K562 (cell line): ENCODE measurements at regions of chr1 and their contacts with region 1.

Region 1: GRCh38 chr1:6245086-6245868 is 1.3 kb downstream of the HES3 start:
- DNase-seq: peak; percentile 90 to 92 (median 90)
- ATAC-seq: peak; percentile 89
- H3K4me3 ChIP-seq: peak overlapping the region; percentile 34
- H3K27ac ChIP-seq: no peak overlapping the region
- H3K4me1 ChIP-seq: peaks cover 5 to 64% of the 10 kb centered on the region in 2 experiments; a peak in 3 of 5 replicates
- H3K27me3 ChIP-seq: peaks cover 40 to 70% of the 10 kb centered on the region in 2 experiments
- CTCF ChIP-seq: peak; percentile 90 to 98 (median 96)
- EP300 ChIP-seq: no peak
- POLR2A ChIP-seq: no peak
- RAD21 ChIP-seq: peak; percentile 87 to 95

Region 2: DNA sequence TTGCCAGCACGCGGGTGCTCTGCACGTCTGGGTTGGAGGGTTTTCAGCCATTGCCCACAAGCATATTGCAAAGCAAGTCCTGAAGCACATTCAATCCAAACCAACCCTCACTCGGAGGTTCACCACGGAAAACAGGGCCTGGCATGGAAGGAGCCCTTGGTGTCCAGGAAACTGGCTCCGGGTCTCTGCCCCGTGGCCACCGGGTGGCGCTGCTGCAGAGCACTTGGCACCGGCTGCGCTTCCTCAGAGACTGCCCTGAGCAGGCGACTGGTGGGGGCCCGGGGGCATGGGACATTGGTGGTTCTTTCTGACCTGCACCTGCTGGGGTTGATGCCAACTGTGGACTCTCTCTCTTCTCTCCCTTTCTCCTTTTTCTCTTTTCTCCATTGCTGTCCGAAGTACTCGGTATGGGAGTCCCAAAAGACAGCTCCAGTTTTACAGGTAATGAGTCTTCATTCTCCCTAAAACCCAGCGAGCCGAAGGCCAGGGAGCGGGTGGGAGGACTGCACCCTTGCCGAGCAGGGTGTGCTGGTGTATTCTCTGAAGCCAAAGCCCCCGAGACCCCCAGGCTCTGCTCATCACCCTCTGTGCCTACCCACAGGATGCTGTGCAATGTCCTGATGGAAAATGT is 203.7 kb before region 1 on chr1:
- CTCF ChIA-PET with region 1: interaction called, 16 read pairs
- POLR2A ChIA-PET with region 1: interaction called, 4 read pairs
- in situ Hi-C with region 1: no loop called
- intact Hi-C with region 1: no loop called
- DNase-seq: peak; percentile 70 to 83 (median 81)
- ATAC-seq: peak; percentile 94
- H3K4me3 ChIP-seq: no peak overlapping the region
- H3K27ac ChIP-seq: no peak overlapping the region
- H3K4me1 ChIP-seq: peaks cover 0 to 20% of the 10 kb centered on the region in 2 experiments; a peak in 2 of 5 replicates
- H3K27me3 ChIP-seq: peaks cover 0 to 19% of the 10 kb centered on the region in 2 experiments; a peak in 4 of 5 replicates
- CTCF ChIP-seq: peak; percentile 85 to 89 (median 88)
- EP300 ChIP-seq: no peak
- POLR2A ChIP-seq: no peak
- RAD21 ChIP-seq: peak in 1 of 2 experiments; percentile 84; a peak in 3 of 4 replicates

Region 3: DNA sequence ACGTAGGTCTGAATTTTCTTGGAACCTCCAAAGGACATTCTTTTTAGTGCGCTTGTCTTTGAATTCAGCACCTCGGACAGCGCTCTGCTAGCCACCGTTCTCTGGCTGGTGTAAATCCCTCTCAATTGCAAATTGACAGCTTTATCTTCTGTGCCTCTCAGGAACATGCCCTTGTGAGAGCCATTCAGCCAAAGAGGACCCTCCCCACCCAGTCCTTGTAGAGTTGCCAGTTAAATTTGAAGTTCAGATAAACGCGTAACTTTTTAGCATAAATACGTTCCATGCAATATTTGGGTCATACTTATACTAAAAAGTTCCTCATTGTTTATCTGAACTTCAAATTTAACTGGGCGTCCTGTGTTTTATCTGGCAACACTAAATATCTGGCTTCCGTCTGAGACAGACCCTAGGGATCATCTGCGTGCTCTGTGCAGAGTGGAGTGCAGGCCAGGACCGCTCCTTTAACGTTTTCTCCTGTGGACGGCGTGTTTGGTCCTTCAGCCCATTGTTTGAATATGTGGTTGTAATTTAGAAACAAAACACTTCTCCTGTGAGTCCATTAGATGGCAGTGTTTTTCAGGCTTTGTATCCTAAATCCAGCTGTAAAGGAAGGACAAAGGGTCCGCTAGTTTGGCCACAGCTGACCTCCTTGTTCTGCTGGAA is 192.6 kb before region 1 on chr1:
- CTCF ChIA-PET with region 1: interaction called, 15 read pairs
- POLR2A ChIA-PET with region 1: interaction called, 6 read pairs
- in situ Hi-C with region 1: no loop called
- intact Hi-C with region 1: loop called (anchors 1 kb)
- DNase-seq: peak; percentile 70 to 83 (median 75)
- ATAC-seq: peak; percentile 86
- H3K4me3 ChIP-seq: no peak overlapping the region
- H3K27ac ChIP-seq: no peak overlapping the region
- H3K4me1 ChIP-seq: peaks cover 0 to under 1% of the 10 kb centered on the region in 2 experiments; a peak in 1 of 5 replicates
- H3K27me3 ChIP-seq: peaks cover 9 to 29% of the 10 kb centered on the region in 2 experiments; a peak in 4 of 5 replicates
- CTCF ChIP-seq: peak; percentile 72 to 84 (median 72)
- EP300 ChIP-seq: no peak
- POLR2A ChIP-seq: no peak
- RAD21 ChIP-seq: peak in 1 of 2 experiments; percentile 85; a peak in 3 of 4 replicates

Region 4: DNA sequence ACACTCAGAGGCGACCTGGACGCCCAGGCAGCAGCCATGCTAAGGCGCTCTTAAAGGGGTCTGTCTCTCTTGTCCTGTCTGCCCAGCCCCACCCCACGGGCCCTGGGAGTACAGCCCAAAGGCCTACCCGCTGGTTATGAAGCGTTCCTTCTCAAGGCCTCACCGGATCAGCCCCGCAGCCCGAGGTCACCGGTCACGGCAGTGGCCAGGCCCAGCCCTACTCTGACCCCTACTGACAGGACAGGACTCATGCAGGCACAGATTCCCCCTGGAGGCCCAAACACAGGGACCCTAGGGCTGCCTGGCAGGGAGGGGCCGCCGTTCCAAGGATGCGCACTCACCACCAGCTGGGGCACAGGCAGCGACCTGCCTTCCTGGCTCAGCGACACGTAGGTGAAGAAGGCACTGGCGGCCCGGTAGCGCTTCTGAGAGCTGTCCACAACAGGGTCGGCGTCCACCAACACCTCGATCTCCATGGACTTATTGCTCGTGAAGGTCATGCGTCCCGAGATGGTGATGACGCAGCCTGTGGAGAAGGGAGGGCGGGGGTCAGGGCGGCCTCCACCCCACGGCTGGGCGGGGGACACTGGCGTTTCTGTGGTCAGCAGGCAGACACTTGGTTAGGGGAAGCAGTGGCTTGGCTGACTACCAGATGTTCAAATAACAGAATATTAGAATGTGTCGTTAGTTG is 35.6 kb after region 1 on chr1:
- CTCF ChIA-PET with region 1: interaction called, 20 read pairs
- POLR2A ChIA-PET with region 1: interaction called, 4 read pairs
- in situ Hi-C with region 1: no loop called
- intact Hi-C with region 1: loop called (anchors 2 kb)
- DNase-seq: peak; percentile 69 to 81 (median 78)
- ATAC-seq: peak; percentile 95
- H3K4me3 ChIP-seq: no peak overlapping the region
- H3K27ac ChIP-seq: no peak overlapping the region
- H3K4me1 ChIP-seq: peaks cover 5 to 52% of the 10 kb centered on the region in 2 experiments; a peak in 4 of 5 replicates
- H3K27me3 ChIP-seq: no peaks in the 10 kb centered on the region; a peak in 1 of 5 replicates
- CTCF ChIP-seq: peak; percentile 76 to 88 (median 81)
- EP300 ChIP-seq: no peak
- POLR2A ChIP-seq: no peak
- RAD21 ChIP-seq: peak; percentile 47 to 80; a peak in 3 of 4 replicates

Region 5: DNA sequence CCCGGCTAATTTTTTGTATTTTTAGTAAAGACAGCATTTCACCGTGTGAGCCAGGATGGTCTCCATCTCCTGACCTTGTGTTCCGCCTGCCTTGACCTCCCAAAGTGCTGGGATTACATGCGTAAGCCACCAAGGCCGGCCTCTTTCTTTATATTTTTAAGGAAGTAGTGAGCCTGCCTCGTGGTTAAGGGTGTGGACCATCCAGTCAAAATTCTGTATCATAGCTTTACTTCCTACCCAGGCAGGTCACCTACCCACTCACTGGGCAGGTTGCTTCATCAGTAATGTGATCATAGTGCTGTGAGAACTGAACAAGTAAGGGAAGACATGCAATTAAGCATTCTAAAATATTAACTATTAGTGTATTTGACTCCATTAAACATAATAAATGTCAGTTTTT is 156.4 kb after region 1 on chr1:
- CTCF ChIA-PET with region 1: interaction called, 7 read pairs
- POLR2A ChIA-PET with region 1: no interaction called
- in situ Hi-C with region 1: no loop called
- intact Hi-C with region 1: loop called (anchors 2 kb)
- DNase-seq: no peak
- ATAC-seq: no peak
- H3K4me3 ChIP-seq: no peak overlapping the region
- H3K27ac ChIP-seq: no peak overlapping the region
- H3K4me1 ChIP-seq: peaks cover 0 to 12% of the 10 kb centered on the region in 2 experiments; a peak in 3 of 5 replicates
- H3K27me3 ChIP-seq: peaks cover 6% of the 10 kb centered on the region in 2 experiments
- CTCF ChIP-seq: no peak
- EP300 ChIP-seq: no peak
- POLR2A ChIP-seq: no peak
- RAD21 ChIP-seq: no peak

Region 6: DNA sequence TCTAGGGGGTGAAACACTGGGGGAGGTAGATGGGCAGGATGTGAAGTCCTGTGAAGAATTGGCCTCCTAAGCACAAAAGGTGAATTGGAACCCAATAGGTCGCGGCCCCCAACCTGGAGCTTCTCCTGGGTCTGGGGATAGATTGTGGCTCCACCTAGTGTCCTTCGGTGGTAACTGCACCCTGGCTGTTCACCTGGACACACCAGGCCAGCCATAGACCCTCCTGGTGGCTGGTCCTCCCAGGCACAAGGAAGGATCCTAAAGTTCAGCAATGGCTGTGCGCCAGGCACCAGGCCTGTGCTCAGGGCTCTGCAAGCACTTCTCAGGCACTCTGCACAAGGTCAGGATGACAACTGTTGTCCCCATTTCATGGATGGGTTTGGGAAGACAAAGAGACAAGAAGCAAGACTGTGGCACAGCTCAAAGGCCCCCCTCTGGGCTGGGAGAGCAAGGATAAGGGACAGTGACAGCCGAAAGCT is 192.8 kb after region 1 on chr1:
- CTCF ChIA-PET with region 1: interaction called, 11 read pairs
- POLR2A ChIA-PET with region 1: no interaction called
- in situ Hi-C with region 1: no loop called
- intact Hi-C with region 1: loop called (anchors 1 kb)
- DNase-seq: peak; percentile 79 to 90 (median 86)
- ATAC-seq: peak; percentile 79
- H3K4me3 ChIP-seq: no peak overlapping the region
- H3K27ac ChIP-seq: no peak overlapping the region
- H3K4me1 ChIP-seq: peaks cover 0 to 20% of the 10 kb centered on the region in 2 experiments; a peak in 2 of 5 replicates
- H3K27me3 ChIP-seq: peaks cover 6 to 51% of the 10 kb centered on the region in 2 experiments; a peak in 4 of 5 replicates
- CTCF ChIP-seq: peak; percentile 96 to 98 (median 96)
- EP300 ChIP-seq: no peak
- POLR2A ChIP-seq: no peak
- RAD21 ChIP-seq: peak; percentile 50 to 90

Region 7: DNA sequence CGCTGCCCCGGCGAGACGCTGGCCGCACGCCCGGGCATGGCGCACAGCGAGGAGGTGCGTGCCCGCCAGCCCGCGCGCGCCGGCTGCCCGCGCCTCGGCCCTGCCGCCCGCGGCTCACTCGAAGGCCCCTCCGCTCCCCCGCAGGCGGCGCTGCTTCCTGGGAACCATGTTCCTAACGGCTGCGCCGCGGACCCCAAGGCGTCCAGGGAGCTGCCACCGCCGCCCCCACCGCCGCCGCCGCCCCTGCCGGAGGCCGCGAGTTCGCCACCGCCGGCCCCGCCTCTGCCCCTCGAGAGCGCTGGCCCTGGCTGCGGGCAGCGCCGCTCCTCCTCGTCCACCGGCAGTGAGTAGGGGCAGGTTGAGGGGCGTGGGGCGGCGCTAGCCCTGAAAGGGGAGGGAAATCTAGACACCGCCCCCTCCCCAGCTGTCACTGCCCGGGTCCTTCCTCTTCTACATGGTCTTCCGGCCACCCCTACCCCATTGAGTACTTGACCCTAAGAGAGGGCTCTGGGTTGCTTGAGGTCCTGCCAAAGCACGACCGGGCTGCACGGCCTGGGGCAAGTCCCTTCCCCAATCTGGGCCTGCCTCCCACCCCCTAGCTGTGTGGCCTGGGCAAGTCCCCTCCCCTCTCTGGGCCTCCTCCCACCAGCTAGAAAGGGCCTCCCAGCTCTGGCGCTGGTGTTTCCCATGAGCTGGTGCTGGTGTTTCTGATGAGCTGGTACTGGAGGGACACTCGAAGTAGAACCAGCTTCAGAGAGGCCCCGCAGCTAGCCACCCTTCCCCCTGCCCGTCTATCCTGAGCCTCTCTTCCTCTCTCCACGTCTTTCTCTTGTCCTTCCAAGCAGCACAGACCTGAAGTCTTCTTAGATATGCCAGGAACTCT is 203.7 kb after region 1 on chr1:
- CTCF ChIA-PET with region 1: no interaction called
- POLR2A ChIA-PET with region 1: no interaction called
- in situ Hi-C with region 1: no loop called
- intact Hi-C with region 1: no loop called
- DNase-seq: peak in 3 of 4 experiments; percentile 57 to 75 (median 71)
- ATAC-seq: peak; percentile 30
- H3K4me3 ChIP-seq: no peak overlapping the region
- H3K27ac ChIP-seq: no peak overlapping the region
- H3K4me1 ChIP-seq: peaks cover 0 to 51% of the 10 kb centered on the region in 2 experiments; a peak in 2 of 5 replicates
- H3K27me3 ChIP-seq: peaks cover 65 to 87% of the 10 kb centered on the region in 2 experiments
- CTCF ChIP-seq: peak in 1 of 3 experiments; percentile 44; a peak in 3 of 6 replicates
- EP300 ChIP-seq: no peak
- POLR2A ChIP-seq: no peak
- RAD21 ChIP-seq: no peak

Region 8: GRCh38 chr1:6634371-6635052 is 389.2 kb after region 1 on chr1:
- CTCF ChIA-PET with region 1: no interaction called
- POLR2A ChIA-PET with region 1: no interaction called
- in situ Hi-C with region 1: no loop called
- intact Hi-C with region 1: no loop called
- DNase-seq: peak; percentile 53 to 68 (median 59)
- ATAC-seq: peak; percentile 91
- H3K4me3 ChIP-seq: no peak overlapping the region
- H3K27ac ChIP-seq: no peak overlapping the region
- H3K4me1 ChIP-seq: peaks cover 0 to 21% of the 10 kb centered on the region in 2 experiments; a peak in 1 of 5 replicates
- H3K27me3 ChIP-seq: no peaks in the 10 kb centered on the region
- CTCF ChIP-seq: peak; percentile 68 to 75 (median 72)
- EP300 ChIP-seq: no peak
- POLR2A ChIP-seq: peak; percentile 50; the same call in 1 of the 2 replicates
- RAD21 ChIP-seq: peak; percentile 25 to 71; a peak in 3 of 4 replicates